Calu3 (cell line): ENCODE measurements at regions of chr1 and their contacts with region 1.

Region 1: GRCh38 chr1:230758709-230759368 is 11.7 kb downstream of the CAPN9 start:
- DNase-seq: no peak
- H3K4me3 Mint-ChIP-seq: no peak overlapping the region
- H3K27ac Mint-ChIP-seq: no peak overlapping the region
- H3K4me1 Mint-ChIP-seq: peaks cover 8% of the 10 kb centered on the region
- H3K27me3 Mint-ChIP-seq: no peaks in the 10 kb centered on the region
- CTCF ChIP-seq: no peak

Region 2: DNA sequence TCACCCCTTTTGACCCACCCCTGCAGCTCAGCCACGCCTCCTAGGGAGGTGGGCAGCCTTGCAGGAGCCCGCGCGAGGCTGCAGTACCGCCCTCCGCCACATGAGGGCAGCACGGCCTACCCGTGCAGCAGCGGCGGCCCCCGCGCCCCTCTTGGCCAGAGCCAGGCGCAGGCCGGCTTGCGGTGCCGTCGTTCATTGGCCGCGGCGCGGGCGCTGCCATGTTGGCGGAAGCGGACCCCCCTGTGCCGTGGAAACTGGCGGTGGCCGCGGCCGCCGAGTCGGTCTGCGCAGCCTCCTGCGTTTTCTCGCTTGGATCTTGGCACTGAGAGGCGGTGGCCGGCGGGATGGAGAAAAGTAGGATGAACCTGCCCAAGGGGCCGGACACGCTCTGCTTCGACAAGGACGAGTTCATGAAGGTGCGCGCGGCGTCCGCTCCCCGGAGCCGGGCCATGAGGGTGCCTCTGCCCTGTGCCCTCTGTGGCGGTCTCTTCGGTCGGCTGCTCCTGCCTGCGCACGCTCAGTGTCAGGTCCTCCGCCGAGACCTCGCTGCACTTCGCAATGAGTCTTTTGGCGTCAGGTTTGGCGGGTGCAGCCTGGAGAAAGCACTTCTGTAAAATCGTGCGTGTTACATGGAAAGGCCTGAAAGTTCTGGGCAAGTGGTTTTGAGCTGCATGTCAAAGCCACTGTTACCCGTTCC is 116.4 kb before region 1 on chr1 and contains the start of gene COG2:
- CTCF ChIA-PET with region 1: interaction called, 15 read pairs
- intact Hi-C with region 1: no loop called
- DNase-seq: peak; percentile 99
- H3K4me3 Mint-ChIP-seq: peak within 1 kb of the TSS; percentile 99
- H3K27ac Mint-ChIP-seq: peak within 1 kb of the TSS; percentile 95
- H3K4me1 Mint-ChIP-seq: peaks cover 47% of the 10 kb centered on the region
- H3K27me3 Mint-ChIP-seq: no peaks in the 10 kb centered on the region
- CTCF ChIP-seq: peak; percentile 99
- total RNA-seq, gene COG2: 55.0 and 59.2 TPM in 2 replicates